Naive thymus-derived CD4-positive, alpha-beta T cell (primary cell): ENCODE measurements at regions of chr16 and their contacts with region 1.

Region 1: GRCh38 chr16:4253394-4254150 is 11.7 kb upstream of the SRL start:
- DNase-seq: peak; percentile 94 to 100 (median 100)
- ATAC-seq: peak; percentile 97
- H3K4me3 ChIP-seq: peak overlapping the region; percentile 92
- H3K4me3 Mint-ChIP-seq: peak overlapping the region; percentile 88 to 98 (median 96)
- H3K27ac ChIP-seq: peak overlapping the region; percentile 88
- H3K27ac Mint-ChIP-seq: peak overlapping the region; percentile 88 to 98 (median 96)
- H3K4me1 ChIP-seq: peaks cover 3 to 4% of the 10 kb centered on the region in 2 donors
- H3K4me1 Mint-ChIP-seq: peaks cover 0 to 16% (median 8%) of the 10 kb centered on the region in 7 donors
- H3K27me3 ChIP-seq: no peaks in the 10 kb centered on the region
- H3K27me3 Mint-ChIP-seq: no peaks in the 10 kb centered on the region

Region 2: DNA sequence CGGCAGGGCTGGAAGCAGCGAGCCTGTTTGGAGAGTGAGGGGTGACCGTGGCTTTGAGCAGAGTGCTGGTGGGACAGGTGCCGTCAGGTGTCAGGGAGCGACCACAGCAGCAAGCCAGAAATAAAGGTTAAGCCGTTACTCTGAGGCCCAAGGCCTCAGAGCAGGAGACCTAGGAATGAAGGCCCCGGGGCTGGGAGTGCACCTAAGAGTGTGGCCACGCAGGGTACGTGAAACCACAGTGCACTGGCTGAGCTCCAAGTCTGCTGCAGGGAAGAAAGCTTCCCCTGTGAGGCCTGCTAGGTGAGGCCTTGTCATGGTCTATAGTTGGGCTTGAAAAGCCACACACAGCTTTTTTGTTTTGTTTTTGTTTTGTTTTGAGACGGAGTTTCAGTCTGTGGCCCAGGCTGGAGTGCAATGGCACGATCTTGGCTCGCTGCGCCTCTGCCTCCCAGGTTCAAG is 744.1 kb before region 1 on chr16:
- CTCF ChIA-PET with region 1: no interaction called
- POLR2A ChIA-PET with region 1: no interaction called
- intact Hi-C with region 1: loop called in 1 of 2 experiments (anchors 10 kb)
- DNase-seq: peak; percentile 41 to 84 (median 80)
- ATAC-seq: peak; percentile 99
- H3K4me3 ChIP-seq: peak overlapping the region; percentile 13
- H3K4me3 Mint-ChIP-seq: peak overlapping the region in 9 of 10 donors; percentile 21 to 75 (median 68)
- H3K27ac ChIP-seq: peak overlapping the region; percentile 73
- H3K27ac Mint-ChIP-seq: peak overlapping the region; percentile 84 to 98 (median 89)
- H3K4me1 ChIP-seq: peaks cover 23 to 44% of the 10 kb centered on the region in 2 donors
- H3K4me1 Mint-ChIP-seq: peaks cover 33 to 72% (median 62%) of the 10 kb centered on the region in 7 donors
- H3K27me3 ChIP-seq: no peaks in the 10 kb centered on the region
- H3K27me3 Mint-ChIP-seq: no peaks in the 10 kb centered on the region

Region 3: GRCh38 chr16:3793161-3793576 is 460.4 kb before region 1 on chr16:
- CTCF ChIA-PET with region 1: interaction called, 3 read pairs
- POLR2A ChIA-PET with region 1: no interaction called
- intact Hi-C with region 1: loop called in 1 of 2 experiments (anchors 10 kb)
- DNase-seq: peak in 2 of 9 donors; percentile 18 to 21
- ATAC-seq: no peak
- H3K4me3 ChIP-seq: no peak overlapping the region
- H3K4me3 Mint-ChIP-seq: peak overlapping the region in 4 of 10 donors; percentile 16 to 50 (median 33)
- H3K27ac ChIP-seq: no peak overlapping the region
- H3K27ac Mint-ChIP-seq: peak overlapping the region in 1 of 9 donors; percentile 21
- H3K4me1 ChIP-seq: peaks cover 43 to 46% of the 10 kb centered on the region in 2 donors
- H3K4me1 Mint-ChIP-seq: peaks cover 54 to 95% (median 81%) of the 10 kb centered on the region in 7 donors
- H3K27me3 ChIP-seq: no peaks in the 10 kb centered on the region
- H3K27me3 Mint-ChIP-seq: peaks cover 0 to 6% (median 0%) of the 10 kb centered on the region in 5 donors

Region 4: GRCh38 chr16:3857189-3858043 is 396.2 kb before region 1 on chr16:
- CTCF ChIA-PET with region 1: no interaction called
- POLR2A ChIA-PET with region 1: no interaction called
- intact Hi-C with region 1: no loop called
- DNase-seq: no peak
- ATAC-seq: peak; percentile 62
- H3K4me3 ChIP-seq: no peak overlapping the region
- H3K4me3 Mint-ChIP-seq: peak overlapping the region in 6 of 10 donors; percentile 3 to 49 (median 28)
- H3K27ac ChIP-seq: peak overlapping the region; percentile 5
- H3K27ac Mint-ChIP-seq: peak overlapping the region in 8 of 9 donors; percentile 13 to 91 (median 70)
- H3K4me1 ChIP-seq: peaks cover 20 to 38% of the 10 kb centered on the region in 2 donors
- H3K4me1 Mint-ChIP-seq: peaks cover 53 to 95% (median 90%) of the 10 kb centered on the region in 7 donors
- H3K27me3 ChIP-seq: no peaks in the 10 kb centered on the region
- H3K27me3 Mint-ChIP-seq: no peaks in the 10 kb centered on the region

Region 5: GRCh38 chr16:3961449-3961849 is 292.1 kb before region 1 on chr16:
- CTCF ChIA-PET with region 1: interaction called, 5 read pairs
- POLR2A ChIA-PET with region 1: interaction called, 3 read pairs
- intact Hi-C with region 1: loop called (anchors 1 to 5 kb)
- DNase-seq: no peak
- ATAC-seq: no peak
- H3K4me3 ChIP-seq: no peak overlapping the region
- H3K4me3 Mint-ChIP-seq: peak overlapping the region in 7 of 10 donors; percentile 2 to 94 (median 74)
- H3K27ac ChIP-seq: no peak overlapping the region
- H3K27ac Mint-ChIP-seq: peak overlapping the region in 5 of 9 donors; percentile 66 to 98 (median 95)
- H3K4me1 ChIP-seq: peaks cover 15 to 23% of the 10 kb centered on the region in 2 donors
- H3K4me1 Mint-ChIP-seq: peaks cover 9 to 34% (median 24%) of the 10 kb centered on the region in 7 donors
- H3K27me3 ChIP-seq: peaks cover 0 to 2% of the 10 kb centered on the region in 2 donors
- H3K27me3 Mint-ChIP-seq: peaks cover 0 to 15% (median 5%) of the 10 kb centered on the region in 5 donors

Region 6: GRCh38 chr16:4183237-4184036 is 70.1 kb before region 1 on chr16:
- CTCF ChIA-PET with region 1: no interaction called
- POLR2A ChIA-PET with region 1: interaction called, 3 read pairs
- intact Hi-C with region 1: loop called in 1 of 2 experiments (anchors 1 kb)
- DNase-seq: peak; percentile 57 to 99 (median 67)
- ATAC-seq: peak; percentile 89
- H3K4me3 ChIP-seq: peak overlapping the region; percentile 65
- H3K4me3 Mint-ChIP-seq: peak overlapping the region; percentile 61 to 95 (median 80)
- H3K27ac ChIP-seq: peak overlapping the region; percentile 62
- H3K27ac Mint-ChIP-seq: peak overlapping the region in 2 of 9 donors; percentile 53 to 71
- H3K4me1 ChIP-seq: no peaks in the 10 kb centered on the region
- H3K4me1 Mint-ChIP-seq: peaks cover 5 to 12% (median 6%) of the 10 kb centered on the region in 7 donors
- H3K27me3 ChIP-seq: no peaks in the 10 kb centered on the region
- H3K27me3 Mint-ChIP-seq: peaks cover 0 to 18% (median 0%) of the 10 kb centered on the region in 5 donors

Region 7: DNA sequence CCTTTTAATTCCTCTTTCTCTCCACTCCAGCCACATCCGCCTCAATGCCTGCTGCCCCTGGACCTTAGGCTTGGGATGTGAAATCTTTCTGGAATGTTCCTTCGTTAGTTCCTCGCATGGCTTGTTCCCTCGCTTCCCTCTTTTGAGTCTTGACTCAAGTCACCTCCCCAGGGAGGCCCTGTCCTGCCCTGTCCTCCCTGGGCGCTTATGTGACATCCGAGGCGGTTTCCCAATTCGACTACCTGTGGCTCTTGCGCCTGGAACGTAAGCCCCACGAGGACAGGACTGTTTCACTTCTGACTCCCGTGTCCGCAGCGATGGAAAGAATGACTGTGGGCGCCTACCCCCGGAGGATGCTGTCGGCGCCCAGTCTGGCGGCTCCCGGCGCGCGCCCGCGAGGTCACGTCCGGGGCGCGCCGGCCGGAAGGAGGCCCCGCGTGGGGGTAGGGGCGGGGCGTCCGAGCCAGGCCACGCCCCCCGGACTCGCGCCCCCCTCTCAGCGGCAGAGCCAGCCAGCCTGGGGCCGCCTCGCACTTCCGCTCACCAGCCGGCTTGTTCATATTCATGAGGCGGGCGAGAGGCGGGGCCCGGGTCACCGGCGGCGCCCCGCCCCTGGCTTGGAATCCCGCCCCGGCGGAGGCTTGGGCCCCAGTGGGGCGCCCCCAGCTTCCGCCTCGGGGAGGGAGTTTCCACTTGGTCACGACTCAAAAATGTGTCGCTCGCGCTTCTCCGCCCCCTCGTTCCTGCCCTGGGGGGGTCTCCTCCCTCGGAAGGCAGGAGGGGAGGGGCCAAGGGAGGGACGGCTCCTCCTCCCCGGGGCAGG is 53.9 kb after region 1 on chr16:
- CTCF ChIA-PET with region 1: interaction called, 6 read pairs
- POLR2A ChIA-PET with region 1: interaction called, 3 read pairs
- intact Hi-C with region 1: loop called (anchors 1 kb)
- DNase-seq: peak; percentile 97 to 98 (median 97)
- ATAC-seq: peak; percentile 96
- H3K4me3 ChIP-seq: peak overlapping the region; percentile 94
- H3K4me3 Mint-ChIP-seq: peak overlapping the region; percentile 90 to 98 (median 94)
- H3K27ac ChIP-seq: peak overlapping the region; percentile 90
- H3K27ac Mint-ChIP-seq: peak overlapping the region; percentile 94 to 99 (median 95)
- H3K4me1 ChIP-seq: peaks cover 15 to 17% of the 10 kb centered on the region in 2 donors
- H3K4me1 Mint-ChIP-seq: peaks cover 13 to 30% (median 23%) of the 10 kb centered on the region in 7 donors
- H3K27me3 ChIP-seq: no peaks in the 10 kb centered on the region
- H3K27me3 Mint-ChIP-seq: peaks cover 0 to 2% (median 0%) of the 10 kb centered on the region in 5 donors

Region 8: DNA sequence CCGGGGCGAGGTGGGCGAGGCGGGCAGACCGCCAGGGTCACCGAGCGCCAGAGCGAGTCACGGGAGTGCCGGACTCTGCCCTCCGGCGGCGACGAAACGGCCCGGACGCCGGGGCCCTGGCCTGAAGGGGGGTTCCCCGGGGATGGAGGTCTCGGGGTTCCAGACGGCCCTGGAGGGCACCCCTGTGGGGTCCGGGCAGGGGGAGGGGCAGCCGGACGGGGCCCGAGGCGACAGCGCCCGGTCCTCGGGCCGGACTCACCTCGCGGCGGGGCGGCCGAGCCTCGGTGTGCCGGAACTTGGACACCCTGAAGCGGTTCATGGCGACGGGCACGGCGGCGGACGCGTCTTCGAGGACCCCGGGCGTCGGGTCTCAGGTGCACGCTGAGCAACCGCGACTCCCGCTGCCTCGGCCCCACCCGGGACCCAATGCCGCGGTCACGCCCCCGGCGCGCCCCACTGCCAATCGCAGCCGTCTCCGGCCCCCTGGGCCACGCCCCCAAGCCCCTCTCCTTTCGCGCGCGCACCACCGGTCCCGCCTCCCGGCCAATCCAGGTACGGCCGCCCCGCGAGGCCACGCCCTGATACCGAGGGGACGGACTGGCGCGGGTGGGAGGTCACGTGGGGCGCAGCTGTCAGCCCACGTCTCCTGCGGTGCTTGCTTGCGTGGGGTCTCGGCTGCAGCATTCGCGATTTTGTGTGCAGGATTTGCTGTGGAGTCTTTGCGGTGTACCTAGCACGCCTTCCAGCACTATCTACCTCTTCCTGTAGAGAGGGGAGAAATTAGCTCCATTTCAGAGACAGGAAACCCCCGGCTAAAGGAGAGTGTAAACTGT is 162.8 kb after region 1 on chr16 and contains the start of gene CORO7:
- CTCF ChIA-PET with region 1: no interaction called
- POLR2A ChIA-PET with region 1: no interaction called
- intact Hi-C with region 1: loop called in 1 of 2 experiments (anchors 5 kb)
- DNase-seq: peak; percentile 98 to 100 (median 99)
- ATAC-seq: peak; percentile 89
- H3K4me3 ChIP-seq: peak within 1 kb of the TSS; percentile 71
- H3K4me3 Mint-ChIP-seq: peak within 1 kb of the TSS; percentile 88 to 98 (median 95)
- H3K27ac ChIP-seq: peak within 1 kb of the TSS; percentile 98
- H3K27ac Mint-ChIP-seq: peak within 1 kb of the TSS; percentile 91 to 99 (median 98)
- H3K4me1 ChIP-seq: peaks cover 26 to 33% of the 10 kb centered on the region in 2 donors
- H3K4me1 Mint-ChIP-seq: peaks cover 18 to 43% (median 38%) of the 10 kb centered on the region in 7 donors
- H3K27me3 ChIP-seq: no peaks in the 10 kb centered on the region
- H3K27me3 Mint-ChIP-seq: peaks cover 0 to 9% (median 0%) of the 10 kb centered on the region in 5 donors
- total RNA-seq, gene CORO7: 114 to 572 (median 165) TPM

Region 9: GRCh38 chr16:4574919-4575705 is 321.5 kb after region 1 on chr16:
- CTCF ChIA-PET with region 1: no interaction called
- POLR2A ChIA-PET with region 1: no interaction called
- intact Hi-C with region 1: no loop called
- DNase-seq: no peak
- ATAC-seq: no peak
- H3K4me3 ChIP-seq: no peak overlapping the region
- H3K4me3 Mint-ChIP-seq: no peak overlapping the region
- H3K27ac ChIP-seq: no peak overlapping the region
- H3K27ac Mint-ChIP-seq: no peak overlapping the region
- H3K4me1 ChIP-seq: no peaks in the 10 kb centered on the region
- H3K4me1 Mint-ChIP-seq: peaks cover 0 to 3% (median 0%) of the 10 kb centered on the region in 7 donors
- H3K27me3 ChIP-seq: no peaks in the 10 kb centered on the region
- H3K27me3 Mint-ChIP-seq: no peaks in the 10 kb centered on the region